Caco-2 (cell line): ENCODE measurements at regions of chr2 and their contacts with region 1.

Region 1: DNA sequence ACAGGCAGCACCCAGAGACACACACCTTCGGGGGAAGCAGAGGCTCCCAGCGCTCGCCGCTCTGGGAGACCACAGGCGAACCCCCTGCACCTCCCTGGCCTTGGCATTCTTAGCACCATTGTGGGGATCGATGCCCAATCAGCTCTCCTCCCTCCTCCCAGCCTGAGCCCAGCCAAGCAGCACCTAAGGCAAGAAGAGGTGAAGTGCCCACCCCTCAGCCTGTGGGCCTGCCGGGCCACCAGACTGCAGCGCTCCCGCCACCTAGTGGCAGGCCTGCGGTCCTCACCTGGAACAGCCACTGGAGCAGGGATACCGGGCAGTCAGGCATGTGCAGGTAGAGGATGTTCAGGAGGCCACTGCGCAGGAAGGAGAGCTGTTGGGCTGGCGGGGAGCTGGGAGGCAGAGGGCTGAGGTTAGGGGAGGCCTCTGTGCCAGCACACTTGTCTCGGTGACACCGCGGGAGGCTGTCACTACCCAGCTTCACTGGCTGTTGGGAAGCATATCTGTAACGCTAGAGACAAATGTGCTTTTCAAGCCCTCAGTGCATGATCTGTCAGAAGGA is 35.2 kb downstream of the FAM178B start:
- DNase-seq: peak; percentile 85 to 92
- H3K4me3 ChIP-seq: no peak overlapping the region
- H3K4me3 Mint-ChIP-seq: no peak overlapping the region
- H3K27ac Mint-ChIP-seq: no peak overlapping the region
- H3K4me1 ChIP-seq: no peaks in the 10 kb centered on the region
- H3K4me1 Mint-ChIP-seq: no peaks in the 10 kb centered on the region
- H3K27me3 ChIP-seq: no peaks in the 10 kb centered on the region
- H3K27me3 Mint-ChIP-seq: no peaks in the 10 kb centered on the region
- CTCF ChIP-seq: peak; percentile 96 to 97

Region 2: DNA sequence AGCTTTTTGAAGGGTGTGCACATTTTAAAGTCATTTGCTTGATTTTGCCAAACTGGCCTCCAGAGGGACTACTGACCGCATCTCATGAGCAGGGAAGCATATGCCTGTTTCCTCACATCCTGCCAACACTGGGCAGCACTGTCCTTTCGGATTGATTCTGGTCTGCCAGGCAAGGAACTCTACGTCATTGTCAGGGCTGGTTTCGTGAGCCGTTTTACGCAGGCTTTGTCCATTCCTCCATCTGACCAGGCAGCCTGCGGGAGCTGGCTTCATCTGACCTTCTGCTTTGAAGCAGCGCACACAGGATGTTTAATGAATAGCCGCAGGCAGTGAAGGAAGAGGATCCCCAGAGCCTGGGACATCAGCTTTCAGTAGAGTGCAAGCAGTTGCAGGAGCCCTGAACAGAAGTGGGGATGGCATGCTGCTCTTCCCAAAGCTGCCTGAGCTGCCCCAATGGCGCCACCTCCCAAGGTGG is 35.0 kb before region 1 on chr2:
- CTCF ChIA-PET with region 1: interaction called, 3 read pairs
- POLR2A ChIA-PET with region 1: no interaction called
- intact Hi-C with region 1: loop called (anchors 2 kb)
- DNase-seq: peak in 1 of 2 experiments; percentile 54
- H3K4me3 ChIP-seq: no peak overlapping the region
- H3K4me3 Mint-ChIP-seq: no peak overlapping the region
- H3K27ac Mint-ChIP-seq: no peak overlapping the region
- H3K4me1 ChIP-seq: peaks cover 24% of the 10 kb centered on the region
- H3K4me1 Mint-ChIP-seq: peaks cover 53% of the 10 kb centered on the region
- H3K27me3 ChIP-seq: no peaks in the 10 kb centered on the region
- H3K27me3 Mint-ChIP-seq: no peaks in the 10 kb centered on the region
- CTCF ChIP-seq: peak in 1 of 2 experiments; percentile 14

Region 3: DNA sequence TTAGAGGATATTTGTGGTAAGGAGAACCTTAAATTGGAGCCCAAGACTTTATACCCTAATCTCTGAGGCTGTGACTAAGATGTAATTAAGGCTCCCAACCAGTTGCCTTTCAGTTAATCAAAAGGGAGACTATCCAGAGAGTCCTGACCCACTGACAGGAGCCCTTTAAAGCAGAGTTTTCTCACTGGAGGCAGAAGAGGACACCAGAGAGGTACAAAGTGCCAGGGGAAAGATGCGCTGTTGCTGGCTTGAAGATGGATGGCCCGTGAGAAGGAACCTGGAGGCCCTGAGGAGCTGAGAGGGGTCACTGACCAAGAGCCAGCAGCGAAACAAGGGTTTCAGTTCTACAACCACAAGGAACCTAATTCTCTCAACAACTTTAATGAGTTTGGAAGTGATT is 907.3 kb after region 1 on chr2:
- CTCF ChIA-PET with region 1: no interaction called
- POLR2A ChIA-PET with region 1: no interaction called
- intact Hi-C with region 1: no loop called
- DNase-seq: no peak
- H3K4me3 ChIP-seq: no peak overlapping the region
- H3K4me3 Mint-ChIP-seq: no peak overlapping the region
- H3K27ac Mint-ChIP-seq: no peak overlapping the region
- H3K4me1 ChIP-seq: peaks cover 4% of the 10 kb centered on the region; the same call in 1 of the 2 replicates
- H3K4me1 Mint-ChIP-seq: peaks cover 4% of the 10 kb centered on the region
- H3K27me3 ChIP-seq: no peaks in the 10 kb centered on the region
- H3K27me3 Mint-ChIP-seq: no peaks in the 10 kb centered on the region
- CTCF ChIP-seq: no peak